Right ventricle myocardium superior (tissue), 1 donor: ENCODE measurements at regions of chr2 and their contacts with region 1.

Region 1: GRCh38 chr2:197378494-197379307 is 56.1 kb downstream of the SF3B1 start:
- DNase-seq: no peak
- ATAC-seq: peak; percentile 88

Region 2: GRCh38 chr2:197113275-197113711 is 265.4 kb before region 1 on chr2:
- intact Hi-C with region 1: loop called (anchors 2 kb)
- DNase-seq: no peak
- ATAC-seq: no peak

Region 3: DNA sequence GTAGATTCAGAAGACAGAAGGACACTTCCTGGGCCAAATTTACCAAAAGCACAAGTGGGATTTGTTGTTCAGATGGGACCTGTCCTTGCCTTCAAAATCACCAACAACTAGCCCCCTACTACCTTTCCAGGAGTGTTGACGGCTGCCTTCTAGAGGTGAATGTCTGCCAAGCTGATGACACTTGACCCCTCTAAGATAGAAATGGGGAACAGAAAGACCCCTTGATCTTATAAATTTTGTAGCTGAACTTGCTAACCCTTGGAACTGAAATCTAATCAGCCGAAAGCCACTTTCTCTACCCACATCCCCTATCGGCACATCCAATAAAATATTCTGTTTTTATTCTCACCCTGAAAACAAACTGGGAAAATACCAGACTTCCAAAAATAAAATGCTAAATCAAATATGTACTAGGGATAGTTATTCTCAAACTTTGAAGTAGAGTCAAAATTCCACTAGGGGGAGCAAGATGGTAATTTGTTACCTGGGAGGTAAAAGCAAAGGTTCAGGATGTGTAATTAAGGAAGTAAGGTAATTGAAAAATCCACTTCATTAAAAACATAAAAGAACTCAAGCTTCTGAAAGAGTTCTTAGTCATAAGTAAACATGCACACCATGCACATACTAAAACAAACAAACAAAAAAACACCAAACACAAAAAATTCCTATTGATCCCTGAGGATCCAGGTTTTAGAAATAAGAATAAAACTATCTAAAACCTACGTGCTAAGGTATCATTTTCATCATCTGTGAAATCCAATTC is 187.3 kb before region 1 on chr2:
- intact Hi-C with region 1: loop called (anchors 5 kb)
- DNase-seq: no peak
- ATAC-seq: peak; percentile 55

Region 4: DNA sequence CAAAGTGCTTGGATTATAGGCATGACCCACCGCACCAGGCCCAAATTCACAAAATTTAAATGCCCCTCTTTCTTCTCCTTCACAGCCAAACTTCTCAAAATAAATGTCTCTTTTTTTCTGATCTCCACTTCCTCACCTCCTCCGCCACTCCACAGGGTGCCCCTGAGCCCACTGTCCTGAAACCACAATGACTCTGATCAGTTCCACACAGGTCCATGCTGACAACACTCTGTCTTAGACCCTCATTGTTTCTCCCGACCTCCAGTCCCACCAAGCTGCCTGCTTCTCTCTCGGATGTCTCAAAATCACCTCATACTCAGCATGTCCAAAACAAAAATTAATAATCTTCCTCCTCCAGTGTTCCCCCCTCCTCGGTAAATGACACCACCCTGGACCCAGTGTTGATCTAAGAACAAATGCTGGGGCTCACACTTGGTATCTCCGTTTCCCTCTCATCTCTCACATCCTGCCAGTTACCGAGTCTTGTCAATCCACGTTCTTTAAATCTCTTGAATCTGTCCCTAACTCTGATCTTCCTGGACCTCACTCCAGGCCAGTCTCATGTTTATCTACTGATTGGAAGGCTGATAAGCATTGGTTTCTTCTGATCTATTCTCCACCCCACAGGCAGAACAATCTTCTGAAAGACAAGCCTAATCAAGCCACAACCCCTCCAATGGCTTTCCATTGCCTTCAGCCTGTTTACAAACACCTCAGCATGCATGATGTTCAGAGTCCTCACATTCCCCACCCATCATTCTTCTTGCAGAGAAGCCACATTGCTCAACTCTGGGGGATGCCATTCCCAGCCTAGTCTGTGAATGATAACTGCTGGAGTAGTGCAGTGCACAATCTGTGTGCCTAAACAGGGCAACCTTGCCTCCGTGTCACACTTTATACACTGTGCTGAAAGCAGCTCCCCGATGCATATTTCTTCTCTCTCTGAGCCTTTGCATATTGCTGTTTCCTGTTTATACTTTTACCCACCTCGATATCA is 55.7 kb before region 1 on chr2:
- intact Hi-C with region 1: no loop called
- DNase-seq: no peak
- ATAC-seq: no peak